Activated CD8-positive, alpha-beta T cell treated with anti-CD3 and anti-CD28 coated beads, Interleukin-2, amount 10 ng/mL, durations not matched to agents 7 days and 5 days (primary cell): ENCODE measurements at regions of chr5 and their contacts with region 1.

Region 1: DNA sequence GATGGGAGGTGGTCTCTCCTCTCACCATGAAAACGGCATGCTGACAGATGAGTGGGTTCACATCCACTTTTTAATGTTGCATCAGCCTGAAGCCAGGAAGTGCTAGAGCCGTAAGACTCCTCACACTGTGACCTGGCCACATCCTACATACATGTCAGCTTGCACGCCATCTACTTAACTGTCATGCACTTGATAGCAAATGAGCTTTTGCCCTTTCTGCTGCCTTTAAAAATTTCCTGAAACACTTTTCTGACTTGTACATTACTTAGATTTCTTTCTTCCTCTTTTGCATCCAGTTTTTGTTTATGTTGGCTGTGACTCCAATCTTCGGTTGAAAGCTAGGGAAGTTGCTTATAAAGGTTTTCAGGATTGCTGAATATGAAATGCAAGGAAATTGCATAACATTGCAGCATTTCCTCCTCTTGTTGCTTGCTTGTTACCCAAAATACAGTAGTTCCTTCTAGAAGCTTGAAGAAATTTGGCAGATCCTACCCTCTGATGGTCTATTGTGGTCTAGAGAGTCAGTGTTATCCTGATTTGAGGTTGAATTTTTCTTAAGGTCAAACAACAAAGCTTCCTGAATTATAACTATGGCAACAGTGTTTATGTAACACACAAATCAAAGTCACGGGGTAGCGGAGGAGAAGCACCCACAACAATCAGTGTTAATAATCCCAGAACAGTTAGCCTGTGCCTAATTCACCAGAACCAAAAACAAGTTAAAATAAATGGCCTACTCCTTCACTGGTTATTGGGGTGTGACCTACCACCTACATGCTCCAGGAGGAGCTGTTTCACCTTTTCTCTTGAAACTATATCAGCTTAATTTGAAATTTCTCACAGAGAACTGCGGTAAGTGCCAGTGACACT is 232.5 kb downstream of the ARHGAP26 start:
- DNase-seq: peak; percentile 88
- ATAC-seq: peak; percentile 91
- H3K4me3 Mint-ChIP-seq: peak overlapping the region; percentile 63
- H3K27ac Mint-ChIP-seq: peak overlapping the region; percentile 100
- H3K4me1 Mint-ChIP-seq: peaks cover 91% of the 10 kb centered on the region
- H3K27me3 Mint-ChIP-seq: no peaks in the 10 kb centered on the region

Region 2: DNA sequence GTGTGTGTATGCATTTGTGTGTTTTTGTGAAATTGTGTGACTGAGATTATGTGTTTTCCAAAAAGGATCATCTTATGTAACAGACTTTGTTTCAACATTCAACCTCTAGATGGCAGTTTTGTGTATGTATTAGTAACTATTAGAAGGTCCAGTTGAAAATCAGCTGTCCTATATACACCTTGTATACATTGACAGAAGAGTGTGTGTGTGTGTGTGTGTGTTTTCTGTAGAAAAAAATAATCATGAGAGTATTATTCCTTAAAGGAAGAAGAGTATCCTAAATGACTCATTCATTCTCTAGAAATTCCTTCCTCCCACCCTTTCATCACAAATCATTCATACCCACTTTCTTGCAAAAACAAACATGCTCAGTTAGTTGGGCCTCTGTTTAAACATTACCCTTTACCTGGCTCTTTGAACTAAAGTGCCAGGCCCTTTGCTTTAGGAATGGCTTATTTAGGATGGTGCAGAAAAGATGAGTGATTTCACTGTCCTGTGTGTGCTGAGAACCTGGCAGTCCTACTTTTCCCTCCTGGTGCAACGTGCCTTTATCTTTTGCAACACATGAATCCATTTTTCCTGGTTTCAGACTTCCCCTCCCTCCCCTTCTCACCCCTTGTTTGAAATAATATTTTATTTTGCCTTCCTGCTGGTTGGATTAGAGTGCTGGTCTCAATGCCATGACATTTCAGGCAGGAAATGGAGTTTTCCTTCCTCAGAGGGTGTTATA is 80.3 kb before region 1 on chr5:
- CTCF ChIA-PET with region 1: interaction called, 52 read pairs
- POLR2A ChIA-PET with region 1: no interaction called
- DNase-seq: no peak
- ATAC-seq: no peak
- H3K4me3 Mint-ChIP-seq: no peak overlapping the region
- H3K27ac Mint-ChIP-seq: no peak overlapping the region
- H3K4me1 Mint-ChIP-seq: peaks cover 41% of the 10 kb centered on the region
- H3K27me3 Mint-ChIP-seq: no peaks in the 10 kb centered on the region

Region 3: DNA sequence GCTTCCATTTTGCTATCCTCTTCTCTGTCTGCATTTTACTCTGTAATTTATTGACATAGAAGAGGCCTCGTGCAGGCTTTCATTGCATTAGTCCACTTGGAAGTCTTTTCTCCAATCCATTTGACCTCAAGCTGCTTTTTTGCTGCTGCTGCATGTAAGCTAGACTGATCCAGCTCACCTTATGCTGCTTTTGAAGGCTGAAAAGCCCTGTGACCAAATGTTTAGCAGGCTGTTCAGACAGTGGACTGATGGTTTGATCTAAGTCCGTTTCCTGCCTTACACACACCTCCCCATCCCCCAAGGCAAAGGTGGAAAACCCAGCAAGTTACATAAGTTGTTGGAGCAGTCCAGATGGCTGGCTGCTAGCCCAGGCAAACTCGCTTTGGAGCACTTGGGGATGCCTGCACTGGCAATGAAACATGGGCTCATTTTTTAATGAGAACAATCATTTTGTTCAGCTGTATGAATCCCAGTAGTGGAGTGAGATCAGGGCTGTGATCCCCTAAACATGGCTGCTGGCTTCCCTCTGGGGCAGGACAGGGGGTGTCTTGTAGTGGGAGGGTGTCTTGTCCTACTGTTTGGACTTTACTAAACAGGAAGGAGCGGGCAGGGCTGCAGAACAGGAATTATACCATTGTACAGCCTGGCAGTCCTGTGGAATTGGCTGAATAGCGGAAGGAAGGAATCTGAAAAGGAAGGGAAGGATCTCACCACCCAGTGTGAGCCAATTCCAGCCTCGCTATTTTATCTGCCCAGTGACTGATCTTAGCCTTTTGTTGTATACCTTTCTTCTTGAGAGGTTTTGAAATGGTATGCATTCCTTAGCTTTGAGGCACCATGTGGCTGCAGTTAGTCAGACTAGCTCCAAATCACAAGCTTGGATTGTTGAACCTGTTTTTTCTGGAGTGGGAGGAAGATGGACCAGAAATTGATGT is 20.5 kb before region 1 on chr5:
- CTCF ChIA-PET with region 1: interaction called, 11 read pairs
- POLR2A ChIA-PET with region 1: interaction called, 4 read pairs
- DNase-seq: no peak
- ATAC-seq: no peak
- H3K4me3 Mint-ChIP-seq: no peak overlapping the region
- H3K27ac Mint-ChIP-seq: peak overlapping the region; percentile 53
- H3K4me1 Mint-ChIP-seq: peaks cover 59% of the 10 kb centered on the region
- H3K27me3 Mint-ChIP-seq: no peaks in the 10 kb centered on the region

Region 4: DNA sequence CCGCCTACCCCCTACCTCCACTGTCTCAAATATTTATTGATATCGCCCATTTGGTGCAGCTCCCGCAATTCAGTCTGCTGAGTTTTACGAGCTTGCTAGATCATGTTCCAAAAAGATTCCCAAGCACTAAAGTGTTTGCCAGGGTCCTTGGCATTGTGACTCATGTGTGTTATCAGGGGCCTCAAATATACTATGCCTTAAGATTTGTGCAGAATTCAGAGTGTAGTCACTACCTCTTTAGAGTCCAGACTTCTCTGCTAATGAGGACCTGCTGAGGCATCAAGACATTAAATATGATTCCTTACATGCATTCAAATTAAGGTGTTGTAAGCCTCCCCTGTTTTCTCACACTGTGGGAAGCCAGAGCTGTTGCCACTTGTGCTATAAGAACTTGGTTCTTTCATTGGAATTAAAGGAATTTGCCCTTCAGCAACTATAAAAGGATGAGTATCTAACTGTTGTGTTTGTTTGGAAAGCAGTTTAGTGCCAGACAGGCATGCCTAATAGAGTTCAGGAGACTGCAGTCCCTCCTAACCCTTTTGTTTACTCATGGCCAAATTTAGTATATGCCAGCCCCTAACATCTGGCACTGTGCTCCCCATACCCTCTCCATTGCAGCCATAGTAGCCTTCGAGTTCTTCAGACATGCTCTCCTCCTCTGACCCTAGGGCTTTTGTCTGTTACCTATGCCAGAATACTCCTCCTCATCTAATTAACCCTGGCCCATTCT is 84.4 kb after region 1 on chr5:
- CTCF ChIA-PET with region 1: no interaction called
- POLR2A ChIA-PET with region 1: no interaction called
- DNase-seq: no peak
- ATAC-seq: no peak
- H3K4me3 Mint-ChIP-seq: no peak overlapping the region
- H3K27ac Mint-ChIP-seq: no peak overlapping the region
- H3K4me1 Mint-ChIP-seq: no peaks in the 10 kb centered on the region
- H3K27me3 Mint-ChIP-seq: no peaks in the 10 kb centered on the region

Region 5: GRCh38 chr5:143403593-143404415 is 401.1 kb after region 1 on chr5 and contains the start of gene NR3C1:
- CTCF ChIA-PET with region 1: interaction called, 43 read pairs
- POLR2A ChIA-PET with region 1: interaction called, 63 read pairs
- DNase-seq: peak; percentile 87
- ATAC-seq: peak; percentile 69
- H3K4me3 Mint-ChIP-seq: peak within 1 kb of the TSS; percentile 88
- H3K27ac Mint-ChIP-seq: peak within 1 kb of the TSS; percentile 97
- H3K4me1 Mint-ChIP-seq: peaks cover 47% of the 10 kb centered on the region
- H3K27me3 Mint-ChIP-seq: no peaks in the 10 kb centered on the region
- total RNA-seq, gene NR3C1: 54.9 to 55.5 TPM

Region 6: GRCh38 chr5:143824851-143825720 is 822.4 kb after region 1 on chr5:
- CTCF ChIA-PET with region 1: interaction called, 12 read pairs
- POLR2A ChIA-PET with region 1: interaction called, 4 read pairs
- DNase-seq: peak; percentile 88
- ATAC-seq: peak; percentile 87
- H3K4me3 Mint-ChIP-seq: no peak overlapping the region
- H3K27ac Mint-ChIP-seq: no peak overlapping the region
- H3K4me1 Mint-ChIP-seq: peaks cover 21% of the 10 kb centered on the region
- H3K27me3 Mint-ChIP-seq: peaks cover 5% of the 10 kb centered on the region